Cardiac septum (tissue), 1 donor: ENCODE measurements at regions of chr3 and their contacts with region 1.

Region 1: GRCh38 chr3:66407611-66408218 is 93.1 kb downstream of the LRIG1 start:
- DNase-seq: peak; percentile 90

Region 2: GRCh38 chr3:66276705-66277274 is 130.9 kb before region 1 on chr3:
- intact Hi-C with region 1: loop called (anchors 10 kb)
- DNase-seq: no peak

Region 3: GRCh38 chr3:66442254-66443117 is 34.8 kb after region 1 on chr3:
- intact Hi-C with region 1: loop called (anchors 5 kb)
- DNase-seq: peak; percentile 85

Region 4: GRCh38 chr3:66483406-66483906 is 75.7 kb after region 1 on chr3:
- intact Hi-C with region 1: loop called (anchors 5 kb)
- DNase-seq: peak; percentile 83

Region 5: GRCh38 chr3:66673293-66673692 is 265.6 kb after region 1 on chr3:
- intact Hi-C with region 1: loop called (anchors 5 kb)
- DNase-seq: no peak

Region 6: DNA sequence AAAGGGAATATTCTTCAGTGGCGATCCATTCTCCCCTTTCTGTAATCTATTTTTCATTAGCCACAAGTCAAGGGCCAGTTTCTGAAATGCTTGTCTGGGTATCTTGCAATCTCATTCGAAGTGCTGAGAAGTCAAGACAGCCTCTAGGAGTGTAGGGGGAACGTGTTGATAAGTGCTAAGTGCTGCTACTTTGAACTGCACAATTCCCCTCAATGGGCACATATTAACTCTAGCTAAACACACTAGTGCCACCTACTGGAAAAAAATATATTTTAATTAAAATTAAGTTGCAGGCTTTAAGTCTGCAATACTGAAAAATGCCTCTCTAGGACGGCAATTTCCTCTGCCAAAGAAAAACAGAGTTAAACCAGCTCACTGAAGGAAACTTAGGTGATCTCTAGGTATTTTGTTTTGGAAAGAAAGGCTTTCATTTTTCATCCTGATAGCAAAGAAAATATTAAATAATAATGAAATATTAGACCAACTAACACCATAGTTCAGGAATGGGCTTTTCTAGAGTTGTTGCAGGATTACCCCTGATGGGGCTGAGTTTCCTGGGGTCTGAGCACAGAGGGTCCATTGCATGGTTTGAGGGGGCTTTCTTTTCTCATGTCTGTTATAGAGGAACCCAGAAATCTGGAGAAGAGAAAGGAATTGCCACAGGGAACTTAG is 408.5 kb after region 1 on chr3:
- intact Hi-C with region 1: loop called (anchors 2 kb)
- DNase-seq: no peak

Region 7: DNA sequence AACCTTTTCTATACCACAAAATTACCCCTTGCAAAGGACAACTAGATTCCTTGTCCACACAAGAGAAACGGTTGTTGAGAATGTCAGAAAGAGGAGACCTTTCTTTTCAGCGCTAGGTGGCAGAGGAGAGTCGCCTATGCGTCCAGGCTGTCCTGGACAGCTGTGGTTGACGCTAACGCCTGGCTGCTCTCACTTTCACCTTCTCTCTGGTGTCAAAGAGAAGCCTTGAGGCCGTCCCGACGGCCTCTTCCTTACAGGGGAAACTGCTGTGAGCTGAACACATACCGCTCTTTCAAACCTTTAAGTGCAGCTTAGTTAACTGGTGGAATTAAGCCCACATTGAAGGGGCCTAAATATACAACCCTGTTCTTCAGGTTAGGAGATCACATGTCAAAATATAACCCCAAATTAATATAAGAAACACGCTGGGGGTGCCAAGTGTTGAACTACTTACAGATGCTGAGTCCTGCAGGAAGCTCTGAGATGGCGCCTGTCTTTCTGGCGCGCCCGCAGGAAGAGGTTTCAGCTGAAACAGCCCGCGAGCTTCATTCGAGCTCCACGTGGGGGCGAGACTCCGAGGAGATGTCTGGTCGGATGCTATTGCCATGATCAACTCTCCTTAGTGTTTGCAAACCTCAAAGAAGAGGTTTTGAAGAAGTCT is 564.3 kb after region 1 on chr3:
- intact Hi-C with region 1: no loop called
- DNase-seq: peak; percentile 81